ENCODE measurements at regions of chr20 and their contacts with region 1.

Region 1: GRCh38 chr20:57383447-57384347 is 7.5 kb upstream of the RBM38 start:
- DNase-seq: no peak
- H3K4me3 ChIP-seq: no peak overlapping the region
- H3K27ac ChIP-seq: no peak overlapping the region
- H3K4me1 ChIP-seq: no peaks in the 10 kb centered on the region
- H3K27me3 ChIP-seq: no peaks in the 10 kb centered on the region
- CTCF ChIP-seq: no peak
- POLR2A ChIP-seq: no peak

Region 2: DNA sequence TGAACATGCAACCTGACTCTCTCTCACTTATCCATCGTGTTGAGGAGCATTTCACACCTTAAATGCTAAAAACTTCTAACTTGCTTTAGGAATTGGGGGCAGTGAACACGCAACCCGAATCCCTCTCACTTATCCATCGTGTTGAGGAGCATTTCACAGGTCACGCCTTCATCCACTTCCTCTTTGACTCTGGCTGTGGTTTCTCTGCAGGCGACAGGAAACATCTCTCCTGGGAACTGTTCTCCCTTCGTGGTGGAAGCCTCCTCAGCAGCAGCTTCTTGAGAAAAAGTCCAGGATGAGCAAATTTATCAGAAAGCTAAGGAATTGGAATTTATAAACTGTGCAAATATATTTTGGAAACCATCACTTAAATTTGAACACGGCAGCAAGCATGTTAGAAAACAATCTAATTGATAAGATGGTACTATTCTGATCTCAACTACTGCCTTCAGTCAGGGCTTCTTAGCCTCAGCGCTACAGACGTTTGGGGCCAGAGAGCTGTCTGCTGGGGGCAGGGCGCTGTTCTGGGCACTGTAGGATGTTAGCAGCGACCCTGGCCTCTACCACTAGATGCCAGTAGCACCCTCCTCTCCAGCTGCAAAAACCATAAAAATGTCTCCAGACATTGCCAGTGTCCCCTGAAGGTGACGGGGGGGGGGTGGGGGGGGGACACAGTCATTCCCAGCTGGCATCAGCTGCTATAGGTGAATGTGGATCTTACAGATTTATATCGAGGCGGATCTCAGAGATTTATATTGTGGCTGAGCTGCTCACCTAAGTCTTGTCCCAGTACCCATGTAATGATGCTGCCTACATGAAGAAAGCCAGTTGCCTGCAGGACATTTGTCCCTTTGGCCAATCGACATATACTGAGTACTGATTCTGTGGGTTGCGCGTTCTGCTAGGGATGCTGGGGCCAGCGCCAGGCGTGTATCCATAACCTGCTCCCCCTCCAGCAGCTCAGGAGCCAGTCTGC is 115.0 kb after region 1 on chr20:
- intact Hi-C with region 1: loop called (anchors 5 kb)
- DNase-seq: no peak
- H3K4me3 ChIP-seq: no peak overlapping the region
- H3K27ac ChIP-seq: no peak overlapping the region
- H3K4me1 ChIP-seq: no peaks in the 10 kb centered on the region
- H3K27me3 ChIP-seq: no peaks in the 10 kb centered on the region
- CTCF ChIP-seq: no peak
- POLR2A ChIP-seq: no peak

Measured in uterus (tissue), 4 donors.